ENCODE measurements at regions of chr11 and their contacts with region 1.

Region 1: DNA sequence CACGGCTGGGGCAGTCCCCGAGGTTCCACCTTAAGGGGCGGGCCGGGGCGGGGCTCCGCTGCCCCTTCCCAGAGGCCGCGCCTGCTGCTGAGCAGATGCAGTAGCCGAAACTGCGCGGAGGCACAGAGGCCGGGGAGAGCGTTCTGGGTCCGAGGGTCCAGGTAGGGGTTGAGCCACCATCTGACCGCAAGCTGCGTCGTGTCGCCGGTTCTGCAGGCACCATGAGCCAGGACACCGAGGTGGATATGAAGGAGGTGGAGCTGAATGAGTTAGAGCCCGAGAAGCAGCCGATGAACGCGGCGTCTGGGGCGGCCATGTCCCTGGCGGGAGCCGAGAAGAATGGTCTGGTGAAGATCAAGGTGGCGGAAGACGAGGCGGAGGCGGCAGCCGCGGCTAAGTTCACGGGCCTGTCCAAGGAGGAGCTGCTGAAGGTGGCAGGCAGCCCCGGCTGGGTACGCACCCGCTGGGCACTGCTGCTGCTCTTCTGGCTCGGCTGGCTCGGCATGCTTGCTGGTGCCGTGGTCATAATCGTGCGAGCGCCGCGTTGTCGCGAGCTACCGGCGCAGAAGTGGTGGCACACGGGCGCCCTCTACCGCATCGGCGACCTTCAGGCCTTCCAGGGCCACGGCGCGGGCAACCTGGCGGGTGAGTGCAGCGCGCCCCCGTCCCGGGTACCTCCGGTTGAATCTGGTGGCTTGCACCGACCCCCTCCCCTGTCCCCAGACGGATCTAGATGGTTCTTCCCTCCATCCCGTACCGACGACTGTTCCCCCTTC is at the start of gene SLC3A2:
- DNase-seq: peak; percentile 80 to 90 (median 87)
- ATAC-seq: peak; percentile 88
- H3K4me3 ChIP-seq: peak within 1 kb of the TSS; percentile 97
- H3K4me3 Mint-ChIP-seq: peak within 1 kb of the TSS; percentile 98 to 100 (median 100)
- H3K27ac ChIP-seq: peak within 1 kb of the TSS; percentile 94
- H3K27ac Mint-ChIP-seq: peak within 1 kb of the TSS; percentile 98 to 100 (median 99)
- H3K4me1 ChIP-seq: peaks cover 34 to 35% of the 10 kb centered on the region in 2 donors
- H3K4me1 Mint-ChIP-seq: peaks cover 34 to 60% (median 53%) of the 10 kb centered on the region in 7 donors
- H3K27me3 ChIP-seq: no peaks in the 10 kb centered on the region
- H3K27me3 Mint-ChIP-seq: peaks cover 0 to 4% (median 0%) of the 10 kb centered on the region in 5 donors
- total RNA-seq, gene SLC3A2: 159 to 239 (median 218) TPM

Region 2: GRCh38 chr11:61860054-61860903 is 1020.7 kb before region 1 on chr11:
- CTCF ChIA-PET with region 1: no interaction called
- POLR2A ChIA-PET with region 1: no interaction called
- intact Hi-C with region 1: no loop called
- DNase-seq: no peak
- ATAC-seq: no peak
- H3K4me3 ChIP-seq: no peak overlapping the region
- H3K4me3 Mint-ChIP-seq: no peak overlapping the region
- H3K27ac ChIP-seq: no peak overlapping the region
- H3K27ac Mint-ChIP-seq: no peak overlapping the region
- H3K4me1 ChIP-seq: no peaks in the 10 kb centered on the region
- H3K4me1 Mint-ChIP-seq: no peaks in the 10 kb centered on the region
- H3K27me3 ChIP-seq: no peaks in the 10 kb centered on the region
- H3K27me3 Mint-ChIP-seq: no peaks in the 10 kb centered on the region

Region 3: DNA sequence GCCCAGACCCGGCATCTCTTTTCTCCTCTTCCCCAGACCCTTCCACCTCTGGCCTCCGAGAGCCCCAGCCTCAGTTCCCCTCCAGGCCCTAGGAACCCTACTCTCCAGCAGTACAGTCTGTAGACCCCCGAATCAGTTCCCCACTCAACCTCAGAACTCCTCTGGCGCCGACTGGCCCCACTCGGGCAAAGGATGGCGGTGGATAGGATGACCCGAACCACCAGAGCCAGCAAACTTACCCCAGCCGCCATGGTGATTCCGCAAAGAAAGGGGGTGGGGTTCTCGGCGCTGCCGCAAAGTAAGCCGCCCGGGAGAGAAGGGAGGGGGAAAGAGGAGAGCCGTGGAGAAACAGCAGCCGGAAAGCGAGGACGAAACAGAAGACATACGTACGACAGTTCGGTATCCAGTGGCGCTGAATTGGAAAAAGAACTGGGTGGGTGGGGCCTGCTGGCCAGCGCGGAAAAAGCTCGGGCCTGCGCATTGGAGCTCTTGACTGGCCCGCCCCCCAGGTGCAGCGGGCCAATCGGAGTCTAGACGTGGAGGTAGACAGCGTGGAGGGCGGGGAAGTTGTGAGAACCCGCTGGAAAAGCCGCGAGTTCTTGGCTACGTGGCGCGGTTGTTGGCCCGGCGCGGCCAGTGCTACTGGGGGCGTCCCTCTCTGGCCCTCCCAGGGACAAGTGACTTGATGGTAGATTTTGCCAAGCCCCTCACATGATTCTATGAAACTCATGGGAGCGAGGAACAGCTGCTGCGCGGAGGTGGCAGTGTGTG is 307.2 kb before region 1 on chr11 and contains the start of gene EEF1G:
- CTCF ChIA-PET with region 1: no interaction called
- POLR2A ChIA-PET with region 1: interaction called, 5 read pairs
- intact Hi-C with region 1: loop called (anchors 1 to 2 kb)
- DNase-seq: peak; percentile 88 to 100 (median 99)
- ATAC-seq: peak; percentile 96
- H3K4me3 ChIP-seq: peak within 1 kb of the TSS; percentile 82
- H3K4me3 Mint-ChIP-seq: peak within 1 kb of the TSS; percentile 94 to 100 (median 97)
- H3K27ac ChIP-seq: peak within 1 kb of the TSS; percentile 88
- H3K27ac Mint-ChIP-seq: peak within 1 kb of the TSS; percentile 81 to 98 (median 95)
- H3K4me1 ChIP-seq: peaks cover 8 to 11% of the 10 kb centered on the region in 2 donors
- H3K4me1 Mint-ChIP-seq: peaks cover 39 to 61% (median 45%) of the 10 kb centered on the region in 7 donors
- H3K27me3 ChIP-seq: no peaks in the 10 kb centered on the region
- H3K27me3 Mint-ChIP-seq: no peaks in the 10 kb centered on the region
- total RNA-seq, gene EEF1G: 1,186 to 2,550 (median 2,338) TPM

Region 4: DNA sequence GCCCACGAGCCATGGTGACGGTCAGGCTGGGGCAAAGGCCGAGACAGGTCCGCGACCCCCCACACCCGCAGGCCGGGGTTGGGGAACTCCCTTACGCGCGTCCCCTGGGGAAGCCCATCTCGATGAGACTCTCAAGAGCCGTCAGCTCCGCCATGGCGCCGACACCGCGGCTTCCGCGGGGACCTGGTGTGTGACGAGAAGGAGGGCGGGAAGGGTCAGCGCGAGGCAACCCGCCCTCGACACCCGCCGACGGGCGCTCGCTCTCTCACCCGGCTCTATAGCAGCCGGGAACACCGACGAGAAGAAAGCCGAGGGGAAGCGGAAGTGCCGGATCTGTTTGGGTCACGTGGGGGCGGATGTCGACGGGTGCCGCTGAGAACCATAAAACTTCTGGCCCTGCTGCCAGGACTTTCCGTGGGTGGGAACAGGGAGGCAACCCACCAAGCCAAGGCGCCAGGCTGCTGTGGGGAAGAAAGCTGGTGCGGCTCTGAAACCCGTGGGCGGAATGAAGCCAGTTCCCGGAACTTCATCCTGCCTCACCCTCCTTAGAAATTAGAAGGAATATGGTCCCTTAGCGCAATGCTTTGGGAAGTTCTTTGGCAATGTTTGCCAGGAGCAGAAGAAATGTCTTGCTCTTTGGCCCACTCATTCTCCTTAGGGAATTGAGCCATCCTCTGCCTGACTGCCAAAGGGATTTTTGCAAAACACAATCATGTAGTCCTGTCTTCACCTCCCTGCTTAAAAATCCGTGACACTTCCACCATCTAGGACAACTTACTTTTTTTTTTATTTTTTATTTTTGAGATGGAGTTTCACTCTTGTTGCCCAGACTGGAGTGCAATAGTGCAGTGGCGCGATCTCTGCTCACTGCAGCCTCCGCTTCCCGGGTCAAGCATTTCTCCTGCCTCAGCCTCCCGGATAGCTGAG is 202.0 kb before region 1 on chr11 and contains the start of gene UBXN1:
- CTCF ChIA-PET with region 1: interaction called, 5 read pairs
- POLR2A ChIA-PET with region 1: interaction called, 3 read pairs
- intact Hi-C with region 1: loop called in 1 of 2 experiments (anchors 1 kb)
- DNase-seq: peak; percentile 63 to 84 (median 81)
- ATAC-seq: peak; percentile 91
- H3K4me3 ChIP-seq: peak within 1 kb of the TSS; percentile 87
- H3K4me3 Mint-ChIP-seq: peak within 1 kb of the TSS; percentile 86 to 93 (median 90)
- H3K27ac ChIP-seq: peak within 1 kb of the TSS; percentile 98
- H3K27ac Mint-ChIP-seq: peak within 1 kb of the TSS; percentile 88 to 98 (median 94)
- H3K4me1 ChIP-seq: peaks cover 13 to 15% of the 10 kb centered on the region in 2 donors
- H3K4me1 Mint-ChIP-seq: peaks cover 19 to 41% (median 37%) of the 10 kb centered on the region in 7 donors
- H3K27me3 ChIP-seq: no peaks in the 10 kb centered on the region
- H3K27me3 Mint-ChIP-seq: no peaks in the 10 kb centered on the region
- total RNA-seq, gene UBXN1: 114 to 215 (median 207) TPM

Region 5: DNA sequence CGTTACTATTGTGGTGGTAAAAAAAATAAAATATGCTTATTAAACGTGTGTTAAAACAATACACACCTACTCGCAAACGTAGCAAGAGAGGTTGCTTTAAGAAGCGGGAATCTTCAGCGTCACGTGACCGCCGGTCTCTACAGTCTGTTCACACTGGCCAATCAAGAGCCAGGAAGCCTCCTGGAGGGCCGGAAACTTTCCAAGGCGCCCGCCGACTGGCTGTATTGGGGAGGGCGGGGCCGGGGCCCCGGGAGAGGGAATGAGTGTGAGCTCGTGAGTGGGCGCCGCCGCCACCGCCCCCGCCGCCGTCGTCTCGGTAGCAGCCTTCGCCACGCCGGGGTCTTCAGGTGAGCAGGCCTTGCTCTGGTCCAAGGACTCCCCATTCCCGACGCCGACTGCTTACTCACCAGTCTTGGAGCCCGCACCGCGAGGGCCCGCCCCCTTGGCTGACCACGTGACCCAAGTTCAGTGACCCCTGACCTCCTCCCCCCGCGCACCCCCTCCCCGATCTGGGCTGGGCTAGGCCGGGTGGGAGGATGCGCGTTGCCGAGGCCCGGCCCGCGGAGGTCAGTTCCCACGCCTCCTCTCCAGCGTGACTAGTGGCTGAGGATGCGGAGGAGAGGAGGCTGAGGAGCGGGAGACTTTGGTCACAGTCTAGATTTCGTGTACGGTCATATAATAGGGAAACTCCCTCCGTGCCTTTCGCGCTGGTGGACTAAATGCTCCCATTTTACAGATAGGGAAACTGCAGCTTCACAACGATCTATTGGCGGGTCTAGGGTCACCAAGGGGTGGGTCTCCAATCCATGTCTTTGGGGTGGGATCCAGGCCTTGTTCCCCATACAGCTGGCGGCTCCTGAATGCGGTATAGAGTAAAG is 109.6 kb before region 1 on chr11 and contains the start of gene TAF6L:
- CTCF ChIA-PET with region 1: no interaction called
- POLR2A ChIA-PET with region 1: interaction called, 18 read pairs
- intact Hi-C with region 1: no loop called
- DNase-seq: peak; percentile 80 to 98 (median 82)
- ATAC-seq: peak; percentile 92
- H3K4me3 ChIP-seq: peak within 1 kb of the TSS; percentile 66
- H3K4me3 Mint-ChIP-seq: peak within 1 kb of the TSS; percentile 88 to 98 (median 94)
- H3K27ac ChIP-seq: peak within 1 kb of the TSS; percentile 82
- H3K27ac Mint-ChIP-seq: peak within 1 kb of the TSS; percentile 89 to 97 (median 94)
- H3K4me1 ChIP-seq: peaks cover 10 to 13% of the 10 kb centered on the region in 2 donors
- H3K4me1 Mint-ChIP-seq: peaks cover 17 to 37% (median 27%) of the 10 kb centered on the region in 7 donors
- H3K27me3 ChIP-seq: no peaks in the 10 kb centered on the region
- H3K27me3 Mint-ChIP-seq: no peaks in the 10 kb centered on the region
- total RNA-seq, gene TAF6L: 13.1 to 34.9 (median 24.1) TPM

Region 6: DNA sequence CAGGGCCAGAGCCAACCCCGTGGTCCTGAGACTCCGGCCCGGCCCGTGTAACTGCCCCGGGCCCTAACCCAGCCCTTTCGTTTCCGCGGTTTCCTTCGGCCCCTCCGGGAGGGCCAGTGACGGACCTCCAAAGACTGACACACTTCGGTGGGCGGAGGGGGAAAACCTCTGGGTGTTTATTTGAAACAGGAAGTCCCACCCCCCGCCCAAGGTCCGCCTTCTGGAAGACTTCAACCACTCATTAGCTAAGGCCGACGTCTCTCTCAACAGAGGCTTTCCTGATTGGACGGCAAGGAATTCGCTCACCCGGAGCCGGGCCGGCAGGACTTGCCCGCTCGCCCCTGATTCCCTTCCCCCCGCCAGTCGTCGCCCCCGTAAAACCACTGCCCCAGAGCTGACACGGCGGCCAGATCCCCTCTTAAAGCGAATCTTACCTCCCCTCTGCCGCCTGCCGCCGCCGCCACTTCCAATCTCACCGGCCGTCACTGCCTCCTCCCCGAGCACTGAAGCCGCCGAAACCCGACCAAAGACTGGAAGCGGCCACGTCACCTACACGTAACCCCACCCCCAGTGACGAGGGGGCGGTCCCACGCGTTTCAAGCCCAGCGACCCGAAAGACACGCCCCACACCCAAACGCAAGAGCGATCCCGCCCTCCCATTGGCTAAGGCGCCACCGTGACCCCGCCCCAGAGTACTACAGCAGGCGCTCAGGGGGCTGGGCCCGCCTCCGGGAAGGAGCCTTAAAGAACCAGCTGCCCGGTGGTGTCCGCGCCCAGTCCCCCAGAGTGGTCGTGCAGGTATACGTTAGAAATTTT is 49.3 kb before region 1 on chr11 and contains the start of gene STX5:
- CTCF ChIA-PET with region 1: interaction called, 3 read pairs
- POLR2A ChIA-PET with region 1: interaction called, 20 read pairs
- intact Hi-C with region 1: loop called in 1 of 2 experiments (anchors 1 kb)
- DNase-seq: peak; percentile 96 to 100 (median 99)
- ATAC-seq: peak; percentile 98
- H3K4me3 ChIP-seq: peak within 1 kb of the TSS; percentile 95
- H3K4me3 Mint-ChIP-seq: peak within 1 kb of the TSS; percentile 87 to 99 (median 96)
- H3K27ac ChIP-seq: peak within 1 kb of the TSS; percentile 99
- H3K27ac Mint-ChIP-seq: peak within 1 kb of the TSS; percentile 93 to 100 (median 99)
- H3K4me1 ChIP-seq: peaks cover 16% of the 10 kb centered on the region in 2 donors
- H3K4me1 Mint-ChIP-seq: peaks cover 15 to 57% (median 45%) of the 10 kb centered on the region in 7 donors
- H3K27me3 ChIP-seq: no peaks in the 10 kb centered on the region
- H3K27me3 Mint-ChIP-seq: no peaks in the 10 kb centered on the region
- total RNA-seq, gene STX5: 47.0 to 152 (median 57.3) TPM

Region 7: DNA sequence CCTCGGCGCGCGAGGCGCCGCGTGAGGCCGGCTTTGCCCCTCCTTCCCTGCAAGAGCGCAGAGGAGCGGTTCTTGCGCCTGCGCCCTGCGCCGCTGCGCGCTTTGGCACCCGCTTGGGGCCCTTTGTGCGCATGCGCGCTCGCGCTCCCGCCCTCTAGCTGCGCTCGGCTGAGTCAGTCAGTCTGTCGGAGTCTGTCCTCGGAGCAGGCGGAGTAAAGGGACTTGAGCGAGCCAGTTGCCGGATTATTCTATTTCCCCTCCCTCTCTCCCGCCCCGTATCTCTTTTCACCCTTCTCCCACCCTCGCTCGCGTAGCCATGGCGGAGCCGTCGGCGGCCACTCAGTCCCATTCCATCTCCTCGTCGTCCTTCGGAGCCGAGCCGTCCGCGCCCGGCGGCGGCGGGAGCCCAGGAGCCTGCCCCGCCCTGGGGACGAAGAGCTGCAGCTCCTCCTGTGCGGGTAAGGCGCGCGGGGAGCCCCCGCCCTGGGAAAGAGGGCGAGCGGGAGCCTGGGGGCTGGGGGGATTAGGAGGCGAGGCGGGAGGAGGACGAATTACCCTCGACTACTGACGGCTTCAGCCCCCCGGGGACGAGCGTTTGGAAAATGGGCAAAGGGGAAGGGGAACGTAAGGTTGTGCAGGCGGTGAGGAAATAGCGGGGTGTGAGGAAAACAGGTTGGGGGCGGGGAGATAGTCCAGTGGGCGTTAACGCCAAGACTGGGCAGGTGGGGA is 800.5 kb after region 1 on chr11 and contains the start of gene RTN3:
- CTCF ChIA-PET with region 1: no interaction called
- POLR2A ChIA-PET with region 1: no interaction called
- intact Hi-C with region 1: loop called in 1 of 2 experiments (anchors 5 kb)
- DNase-seq: peak; percentile 97 to 99 (median 98)
- ATAC-seq: peak; percentile 95
- H3K4me3 ChIP-seq: peak within 1 kb of the TSS; percentile 86
- H3K4me3 Mint-ChIP-seq: peak within 1 kb of the TSS; percentile 89 to 97 (median 94)
- H3K27ac ChIP-seq: peak within 1 kb of the TSS; percentile 69
- H3K27ac Mint-ChIP-seq: peak within 1 kb of the TSS; percentile 50 to 97 (median 83)
- H3K4me1 ChIP-seq: peaks cover 6 to 17% of the 10 kb centered on the region in 2 donors
- H3K4me1 Mint-ChIP-seq: peaks cover 20 to 30% (median 27%) of the 10 kb centered on the region in 7 donors
- H3K27me3 ChIP-seq: no peaks in the 10 kb centered on the region
- H3K27me3 Mint-ChIP-seq: peaks cover 0 to 12% (median 0%) of the 10 kb centered on the region in 5 donors
- total RNA-seq, gene RTN3: 20.8 to 65.7 (median 34.4) TPM